Uterus (tissue), 4 donors: ENCODE measurements at regions of chr13 and their contacts with region 1.

Region 1: GRCh38 chr13:51286135-51287002 is 53.1 kb upstream of the SERPINE3 start:
- DNase-seq: peak; percentile 74 to 79
- H3K4me3 ChIP-seq: no peak overlapping the region
- H3K27ac ChIP-seq: no peak overlapping the region
- H3K4me1 ChIP-seq: no peaks in the 10 kb centered on the region
- H3K27me3 ChIP-seq: no peaks in the 10 kb centered on the region
- CTCF ChIP-seq: peak; percentile 76 to 94 (median 85)
- POLR2A ChIP-seq: no peak

Region 2: DNA sequence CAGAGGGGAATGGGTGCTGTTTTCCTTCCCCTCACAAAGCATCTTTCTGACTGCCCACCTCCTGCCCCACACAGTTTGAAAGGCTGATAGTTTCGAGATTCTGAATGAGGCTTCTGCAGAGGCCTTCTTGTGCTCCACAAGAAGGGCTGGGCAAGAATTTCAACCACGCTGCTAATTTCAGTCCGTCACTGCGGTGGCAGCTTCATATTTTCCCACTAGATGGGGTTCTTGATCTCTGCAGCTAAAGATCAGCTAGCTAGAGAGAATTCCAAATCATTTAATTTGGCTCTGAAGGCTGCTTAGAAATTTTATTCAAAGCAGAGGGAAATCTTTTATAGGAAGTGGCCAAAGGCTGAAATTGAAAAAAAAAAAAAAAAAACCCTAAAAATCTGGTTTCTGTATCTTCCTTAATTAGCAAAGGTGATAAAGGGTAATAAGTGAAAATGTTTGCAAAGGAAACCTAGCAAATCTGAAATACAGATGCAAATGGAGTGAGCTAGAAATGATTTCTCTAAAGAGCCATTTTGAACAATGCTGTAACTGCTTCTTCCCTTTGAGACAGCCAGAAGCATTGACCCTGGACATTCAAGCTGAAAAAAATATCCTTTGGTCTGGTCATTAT is 137.3 kb before region 1 on chr13:
- intact Hi-C with region 1: loop called (anchors 5 kb)
- DNase-seq: peak; percentile 28 to 38
- H3K4me3 ChIP-seq: no peak overlapping the region
- H3K27ac ChIP-seq: no peak overlapping the region
- H3K4me1 ChIP-seq: no peaks in the 10 kb centered on the region
- H3K27me3 ChIP-seq: no peaks in the 10 kb centered on the region
- CTCF ChIP-seq: peak; percentile 39 to 57 (median 45)
- POLR2A ChIP-seq: no peak

Region 3: GRCh38 chr13:51222037-51222685 is 64.2 kb before region 1 on chr13 and contains the start of gene FAM124A:
- intact Hi-C with region 1: loop called (anchors 10 kb)
- DNase-seq: peak; percentile 26 to 62
- H3K4me3 ChIP-seq: peak within 1 kb of the TSS; percentile 59 to 89
- H3K27ac ChIP-seq: peak within 1 kb of the TSS; percentile 58 to 60
- H3K4me1 ChIP-seq: no peaks in the 10 kb centered on the region
- H3K27me3 ChIP-seq: no peaks in the 10 kb centered on the region
- CTCF ChIP-seq: peak in 3 of 4 experiments; percentile 51 to 86 (median 73)
- POLR2A ChIP-seq: peak in 1 of 2 donors; percentile 44
- total RNA-seq, gene FAM124A: 2.1 to 7.2 (median 5.2) TPM

Region 4: DNA sequence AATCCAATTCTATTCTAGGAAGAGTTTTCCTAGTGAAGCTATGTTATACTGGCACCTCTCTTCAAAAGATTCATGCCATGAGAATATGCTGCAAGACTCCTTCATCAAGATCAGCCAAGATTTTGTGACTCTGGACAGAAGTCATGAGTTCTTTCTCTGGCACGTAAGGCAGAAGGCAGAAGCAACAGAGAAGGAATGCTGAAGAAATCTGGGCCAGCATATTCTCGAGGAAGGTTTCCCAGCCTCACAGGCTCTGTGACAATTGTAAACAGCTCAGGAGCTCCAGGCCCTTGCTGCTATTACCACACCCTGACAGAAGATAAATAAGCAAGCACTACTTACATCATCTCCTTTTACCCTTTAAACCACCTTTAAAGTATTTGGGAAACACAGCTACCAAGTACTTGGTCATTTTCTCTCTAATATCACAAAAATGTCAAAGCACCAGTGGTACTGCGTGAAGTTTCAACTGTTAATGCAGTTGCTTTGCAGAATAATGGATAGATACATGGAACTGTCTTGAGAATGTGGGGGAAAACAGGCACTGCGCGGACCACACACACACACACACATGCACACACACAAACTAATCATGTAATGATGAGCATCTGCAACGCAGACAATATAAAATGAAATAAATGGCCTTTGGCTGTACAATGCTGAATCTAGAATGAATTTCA is 111.0 kb after region 1 on chr13:
- intact Hi-C with region 1: no loop called
- DNase-seq: peak in 1 of 2 donors; percentile 17
- H3K4me3 ChIP-seq: no peak overlapping the region
- H3K27ac ChIP-seq: peak overlapping the region; percentile 25 to 41
- H3K4me1 ChIP-seq: peaks cover 0 to 7% of the 10 kb centered on the region in 2 donors
- H3K27me3 ChIP-seq: no peaks in the 10 kb centered on the region
- CTCF ChIP-seq: no peak
- POLR2A ChIP-seq: no peak